Panc1 (cell line): ENCODE measurements at regions of chr9 and their contacts with region 1.

Region 1: GRCh38 chr9:19230356-19231125 is at the start of gene DENND4C:
- DNase-seq: no peak
- ATAC-seq: peak; percentile 90
- H3K4me3 ChIP-seq: peak within 1 kb of the TSS; percentile 53 to 59
- H3K27ac ChIP-seq: peak within 1 kb of the TSS; percentile 68
- H3K4me1 ChIP-seq: peaks cover 6% of the 10 kb centered on the region
- H3K27me3 ChIP-seq: no peaks in the 10 kb centered on the region
- CTCF ChIP-seq: no peak
- total RNA-seq, gene DENND4C: 10.5 TPM

Region 2: GRCh38 chr9:19200229-19200628 is 30.3 kb before region 1 on chr9:
- CTCF ChIA-PET with region 1: no interaction called
- POLR2A ChIA-PET with region 1: interaction called, 17 read pairs
- in situ Hi-C with region 1: no loop called
- intact Hi-C with region 1: no loop called
- DNase-seq: no peak
- ATAC-seq: no peak
- H3K4me3 ChIP-seq: no peak overlapping the region
- H3K27ac ChIP-seq: no peak overlapping the region
- H3K4me1 ChIP-seq: no peaks in the 10 kb centered on the region
- H3K27me3 ChIP-seq: no peaks in the 10 kb centered on the region
- CTCF ChIP-seq: no peak